ENCODE measurements at regions of chr2 and their contacts with region 1.

Region 1: GRCh38 chr2:142980561-142981378 is 103.3 kb downstream of the KYNU start:
- DNase-seq: peak; percentile 39
- ATAC-seq: peak; percentile 31
- H3K4me3 ChIP-seq: no peak overlapping the region
- H3K4me3 Mint-ChIP-seq: no peak overlapping the region
- H3K27ac ChIP-seq: no peak overlapping the region
- H3K27ac Mint-ChIP-seq: peak overlapping the region; percentile 42
- H3K4me1 ChIP-seq: peaks cover 6 to 9% of the 10 kb centered on the region in 2 donors
- H3K4me1 Mint-ChIP-seq: peaks cover 34% of the 10 kb centered on the region
- H3K27me3 ChIP-seq: no peaks in the 10 kb centered on the region
- H3K27me3 Mint-ChIP-seq: no peaks in the 10 kb centered on the region
- CTCF ChIP-seq: peak; percentile 87

Region 2: DNA sequence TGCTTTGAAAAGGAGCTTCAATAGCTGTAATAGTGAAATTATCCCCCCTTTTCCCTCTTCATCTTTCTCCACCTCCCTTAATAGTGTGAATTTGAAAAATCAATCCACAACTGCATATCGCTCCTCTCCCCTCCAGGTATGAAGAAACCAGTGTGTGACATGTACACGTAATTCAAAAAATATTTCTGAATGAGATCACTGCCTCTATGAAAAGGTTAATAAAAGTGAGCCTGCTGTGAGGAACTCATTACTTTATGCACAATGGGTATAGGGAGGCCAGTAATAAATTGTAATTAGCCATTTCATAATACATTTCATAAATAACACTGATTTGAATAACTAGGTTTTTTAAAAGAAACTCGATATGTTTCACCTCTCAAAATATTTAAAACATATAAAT is 312.4 kb before region 1 on chr2:
- CTCF ChIA-PET with region 1: no interaction called
- POLR2A ChIA-PET with region 1: no interaction called
- intact Hi-C with region 1: no loop called
- DNase-seq: no peak
- ATAC-seq: no peak
- H3K4me3 ChIP-seq: no peak overlapping the region
- H3K4me3 Mint-ChIP-seq: no peak overlapping the region
- H3K27ac ChIP-seq: no peak overlapping the region
- H3K27ac Mint-ChIP-seq: no peak overlapping the region
- H3K4me1 ChIP-seq: no peaks in the 10 kb centered on the region
- H3K4me1 Mint-ChIP-seq: no peaks in the 10 kb centered on the region
- H3K27me3 ChIP-seq: no peaks in the 10 kb centered on the region
- H3K27me3 Mint-ChIP-seq: no peaks in the 10 kb centered on the region
- CTCF ChIP-seq: no peak

Region 3: DNA sequence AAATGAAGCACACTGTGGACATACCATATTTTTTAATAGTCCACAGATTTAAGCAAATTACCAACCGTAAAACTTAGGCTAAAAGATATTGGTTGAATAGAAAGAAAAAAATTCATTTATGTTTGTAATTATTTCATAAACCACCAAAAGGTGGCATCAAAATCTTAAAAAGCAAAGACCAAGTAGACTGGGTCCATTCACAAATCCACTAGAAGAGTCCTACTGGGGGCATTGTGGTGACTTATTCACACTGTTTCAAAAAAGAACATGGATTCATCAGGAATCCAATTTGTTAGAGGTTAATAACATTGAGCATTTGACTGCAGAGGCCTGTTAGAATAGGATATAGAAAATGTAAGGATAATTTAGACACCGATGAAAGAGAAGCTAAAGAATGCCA is 298.2 kb before region 1 on chr2:
- CTCF ChIA-PET with region 1: interaction called, 27 read pairs
- POLR2A ChIA-PET with region 1: no interaction called
- intact Hi-C with region 1: loop called (anchors 1 kb)
- DNase-seq: peak; percentile 13
- ATAC-seq: no peak
- H3K4me3 ChIP-seq: no peak overlapping the region
- H3K4me3 Mint-ChIP-seq: no peak overlapping the region
- H3K27ac ChIP-seq: no peak overlapping the region
- H3K27ac Mint-ChIP-seq: no peak overlapping the region
- H3K4me1 ChIP-seq: no peaks in the 10 kb centered on the region
- H3K4me1 Mint-ChIP-seq: no peaks in the 10 kb centered on the region
- H3K27me3 ChIP-seq: no peaks in the 10 kb centered on the region
- H3K27me3 Mint-ChIP-seq: peaks cover 4% of the 10 kb centered on the region
- CTCF ChIP-seq: peak; percentile 37

Region 4: DNA sequence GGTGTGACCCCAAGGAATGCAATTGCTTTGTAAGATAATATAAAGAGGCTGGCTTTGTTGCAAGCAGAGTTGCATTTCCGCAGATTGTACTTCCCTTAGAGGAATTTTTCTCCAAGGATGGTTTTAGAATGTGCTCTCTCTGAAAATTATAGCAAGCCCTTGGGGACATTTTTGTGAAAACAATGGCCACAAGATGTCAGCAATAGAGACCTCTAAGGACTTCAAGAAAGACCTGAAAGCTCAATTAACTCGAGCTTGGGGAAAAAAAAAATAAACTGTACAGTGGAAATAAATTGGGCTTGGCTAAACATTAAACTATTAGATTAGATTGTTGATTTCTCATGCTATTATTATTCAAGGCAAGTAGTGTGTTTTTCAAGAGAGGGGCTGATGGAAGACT is 184.6 kb before region 1 on chr2:
- CTCF ChIA-PET with region 1: interaction called, 57 read pairs
- POLR2A ChIA-PET with region 1: no interaction called
- intact Hi-C with region 1: loop called (anchors 1 kb)
- DNase-seq: peak; percentile 9
- ATAC-seq: no peak
- H3K4me3 ChIP-seq: no peak overlapping the region
- H3K4me3 Mint-ChIP-seq: no peak overlapping the region
- H3K27ac ChIP-seq: no peak overlapping the region
- H3K27ac Mint-ChIP-seq: no peak overlapping the region
- H3K4me1 ChIP-seq: no peaks in the 10 kb centered on the region
- H3K4me1 Mint-ChIP-seq: peaks cover 4% of the 10 kb centered on the region
- H3K27me3 ChIP-seq: no peaks in the 10 kb centered on the region
- H3K27me3 Mint-ChIP-seq: no peaks in the 10 kb centered on the region
- CTCF ChIP-seq: no peak

Region 5: DNA sequence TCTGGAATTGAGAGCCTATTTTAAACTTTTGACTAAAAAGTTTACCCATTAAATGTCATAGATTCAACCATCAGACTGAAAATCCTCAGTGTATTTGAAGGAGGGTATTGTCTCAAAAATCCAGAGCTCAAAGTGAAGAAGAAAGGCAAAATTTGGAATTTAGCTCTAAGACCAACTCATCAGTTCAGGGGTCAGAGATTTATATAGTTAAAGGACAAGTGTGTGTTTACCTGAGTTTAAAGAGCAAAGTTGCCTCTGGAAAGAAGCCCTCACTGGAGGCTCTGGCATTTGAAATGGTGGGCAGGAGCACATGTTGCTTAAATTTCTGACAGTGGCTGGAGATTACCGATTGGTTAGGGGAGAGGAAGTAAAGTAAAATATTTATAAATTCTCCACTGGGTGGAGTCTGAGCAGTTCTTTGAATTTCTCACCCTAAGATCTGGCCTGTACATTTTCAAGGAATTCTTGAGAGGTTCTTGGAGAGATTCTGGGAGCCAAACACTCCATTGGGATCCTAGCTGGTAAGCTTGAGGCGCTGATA is 103.5 kb before region 1 on chr2 and contains the start of gene KYNU:
- CTCF ChIA-PET with region 1: interaction called, 8 read pairs
- POLR2A ChIA-PET with region 1: no interaction called
- intact Hi-C with region 1: loop called (anchors 5 kb)
- DNase-seq: peak; percentile 70
- ATAC-seq: peak; percentile 77
- H3K4me3 ChIP-seq: peak within 1 kb of the TSS; percentile 53 to 80 (median 61)
- H3K4me3 Mint-ChIP-seq: peak within 1 kb of the TSS; percentile 91
- H3K27ac ChIP-seq: peak within 1 kb of the TSS; percentile 84 to 85
- H3K27ac Mint-ChIP-seq: peak within 1 kb of the TSS; percentile 91
- H3K4me1 ChIP-seq: peaks cover 49 to 55% of the 10 kb centered on the region in 2 donors
- H3K4me1 Mint-ChIP-seq: peaks cover 72% of the 10 kb centered on the region
- H3K27me3 ChIP-seq: no peaks in the 10 kb centered on the region
- H3K27me3 Mint-ChIP-seq: no peaks in the 10 kb centered on the region
- CTCF ChIP-seq: peak; percentile 49
- total RNA-seq, gene KYNU: 46.2 and 50.4 TPM in 2 replicates

Region 6: GRCh38 chr2:142903780-142904179 is 77.0 kb before region 1 on chr2:
- CTCF ChIA-PET with region 1: no interaction called
- POLR2A ChIA-PET with region 1: no interaction called
- intact Hi-C with region 1: no loop called
- DNase-seq: no peak
- ATAC-seq: no peak
- H3K4me3 ChIP-seq: no peak overlapping the region
- H3K4me3 Mint-ChIP-seq: no peak overlapping the region
- H3K27ac ChIP-seq: no peak overlapping the region
- H3K27ac Mint-ChIP-seq: peak overlapping the region; percentile 18
- H3K4me1 ChIP-seq: no peaks in the 10 kb centered on the region
- H3K4me1 Mint-ChIP-seq: peaks cover 51% of the 10 kb centered on the region
- H3K27me3 ChIP-seq: no peaks in the 10 kb centered on the region
- H3K27me3 Mint-ChIP-seq: no peaks in the 10 kb centered on the region
- CTCF ChIP-seq: no peak

Region 7: DNA sequence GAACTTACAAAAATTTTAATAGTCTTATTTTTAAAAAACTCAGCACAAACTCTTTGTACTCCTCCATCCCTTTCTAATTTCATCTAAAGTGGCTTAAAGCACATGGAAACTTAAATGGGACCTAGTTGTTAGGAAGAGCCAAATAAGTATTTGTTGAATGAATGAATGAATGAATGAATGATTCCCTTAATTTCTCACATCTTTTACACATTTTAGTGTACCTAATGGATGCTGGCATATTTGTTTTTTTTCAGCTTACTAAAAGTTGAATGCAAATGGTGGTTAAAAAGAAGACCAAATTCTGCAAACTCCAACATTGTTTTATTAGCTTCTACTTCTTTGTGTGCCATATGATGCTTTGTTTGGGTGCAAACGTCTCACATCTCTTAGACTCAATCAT is 13.7 kb before region 1 on chr2:
- CTCF ChIA-PET with region 1: interaction called, 25 read pairs
- POLR2A ChIA-PET with region 1: no interaction called
- intact Hi-C with region 1: no loop called
- DNase-seq: no peak
- ATAC-seq: no peak
- H3K4me3 ChIP-seq: no peak overlapping the region
- H3K4me3 Mint-ChIP-seq: no peak overlapping the region
- H3K27ac ChIP-seq: no peak overlapping the region
- H3K27ac Mint-ChIP-seq: no peak overlapping the region
- H3K4me1 ChIP-seq: no peaks in the 10 kb centered on the region
- H3K4me1 Mint-ChIP-seq: peaks cover 1% of the 10 kb centered on the region
- H3K27me3 ChIP-seq: no peaks in the 10 kb centered on the region
- H3K27me3 Mint-ChIP-seq: no peaks in the 10 kb centered on the region
- CTCF ChIP-seq: no peak

Region 8: DNA sequence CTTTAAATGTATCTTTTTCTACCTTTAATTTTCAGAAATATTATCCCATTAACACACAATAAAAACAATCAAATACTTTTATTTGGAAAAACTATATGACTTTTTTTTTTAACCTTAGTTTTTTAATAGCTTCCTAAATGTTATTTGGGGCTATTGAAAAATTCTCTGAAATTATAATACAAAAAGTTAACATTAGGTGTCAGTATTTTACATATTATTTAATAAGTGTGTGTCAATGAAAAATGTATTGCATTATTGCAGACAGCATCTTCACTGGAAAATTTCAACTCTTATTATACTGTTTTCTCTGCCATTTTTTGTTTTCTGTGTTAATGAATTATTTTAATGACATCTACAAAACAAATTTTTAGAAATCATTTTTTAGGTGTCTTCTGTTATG is 97.3 kb after region 1 on chr2:
- CTCF ChIA-PET with region 1: no interaction called
- POLR2A ChIA-PET with region 1: no interaction called
- intact Hi-C with region 1: no loop called
- DNase-seq: no peak
- ATAC-seq: no peak
- H3K4me3 ChIP-seq: no peak overlapping the region
- H3K4me3 Mint-ChIP-seq: no peak overlapping the region
- H3K27ac ChIP-seq: no peak overlapping the region
- H3K27ac Mint-ChIP-seq: no peak overlapping the region
- H3K4me1 ChIP-seq: no peaks in the 10 kb centered on the region
- H3K4me1 Mint-ChIP-seq: no peaks in the 10 kb centered on the region
- H3K27me3 ChIP-seq: no peaks in the 10 kb centered on the region
- H3K27me3 Mint-ChIP-seq: no peaks in the 10 kb centered on the region
- CTCF ChIP-seq: peak; percentile 24

Region 9: DNA sequence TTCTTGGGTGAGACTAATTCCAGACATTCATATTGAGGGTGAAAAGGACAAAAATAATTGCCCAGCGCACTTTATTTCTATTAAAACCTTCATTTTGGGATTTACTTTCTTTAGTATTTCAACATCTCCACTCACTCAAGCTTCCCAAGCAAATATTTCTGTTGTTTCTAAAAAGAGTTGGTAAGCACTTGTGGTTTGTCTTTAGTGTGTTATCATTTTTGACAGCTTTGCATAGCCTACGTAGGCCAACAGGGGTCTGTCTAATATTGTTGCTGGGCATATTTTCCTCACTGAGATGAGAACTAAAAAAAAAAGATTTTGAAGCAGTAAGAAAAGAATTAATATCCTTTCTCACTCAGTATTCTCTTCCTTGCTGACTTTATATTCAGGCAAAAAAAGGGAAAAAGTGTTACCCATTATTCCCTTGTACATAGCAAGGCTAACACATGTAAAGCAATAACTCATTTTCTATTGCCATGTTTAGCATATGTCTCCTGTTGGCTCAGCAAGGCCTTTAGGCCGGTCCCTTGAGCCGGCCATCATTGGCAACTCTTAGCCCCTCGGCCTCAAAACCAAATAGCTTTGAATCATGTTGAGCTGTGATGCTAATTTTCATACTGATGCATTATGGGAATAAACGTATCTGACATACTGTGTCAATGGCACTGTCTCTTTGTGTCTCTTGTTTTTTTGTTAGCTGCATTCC is 642.6 kb after region 1 on chr2:
- CTCF ChIA-PET with region 1: no interaction called
- POLR2A ChIA-PET with region 1: no interaction called
- intact Hi-C with region 1: no loop called
- DNase-seq: no peak
- ATAC-seq: no peak
- H3K4me3 ChIP-seq: no peak overlapping the region
- H3K4me3 Mint-ChIP-seq: no peak overlapping the region
- H3K27ac ChIP-seq: no peak overlapping the region
- H3K27ac Mint-ChIP-seq: no peak overlapping the region
- H3K4me1 ChIP-seq: no peaks in the 10 kb centered on the region
- H3K4me1 Mint-ChIP-seq: no peaks in the 10 kb centered on the region
- H3K27me3 ChIP-seq: no peaks in the 10 kb centered on the region
- H3K27me3 Mint-ChIP-seq: no peaks in the 10 kb centered on the region
- CTCF ChIP-seq: no peak